ENCODE measurements at regions of chr5 and their contacts with region 1.

Region 1: DNA sequence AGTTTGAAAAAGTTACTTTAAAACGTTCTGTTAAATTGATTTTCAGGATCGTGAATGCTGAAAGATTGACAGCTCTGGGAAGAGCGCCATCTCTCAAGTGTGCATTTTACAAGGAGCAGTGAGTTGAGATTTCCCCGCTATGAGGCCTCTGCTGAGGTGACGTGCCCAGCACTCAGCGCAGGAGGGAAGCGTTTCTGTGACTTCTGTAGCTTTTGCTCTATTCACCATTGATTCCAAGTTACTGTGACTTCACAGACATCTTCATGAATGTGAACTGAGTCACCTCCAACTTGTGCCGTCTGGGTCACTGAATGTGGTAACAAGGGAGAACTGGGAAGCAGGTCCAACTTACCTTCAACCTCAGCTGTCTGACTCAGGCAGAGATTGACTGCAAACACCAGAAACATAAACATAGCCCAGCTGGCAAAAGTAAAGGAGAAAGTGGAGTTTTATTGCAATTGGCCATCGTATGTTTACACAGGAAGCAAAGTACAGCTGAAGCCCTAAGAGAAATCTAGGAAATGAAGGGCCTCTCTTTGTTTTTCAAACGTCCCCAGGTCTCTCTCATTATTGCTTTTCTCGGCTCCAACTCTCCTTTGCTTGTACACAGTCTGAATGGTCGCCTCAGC is 428.8 kb upstream of the CLINT1 start:
- DNase-seq: no peak
- ATAC-seq: peak in 1 of 2 donors; percentile 90

Region 2: GRCh38 chr5:157785801-157786200 is 502.0 kb before region 1 on chr5:
- intact Hi-C with region 1: no loop called
- DNase-seq: no peak
- ATAC-seq: no peak

Region 3: GRCh38 chr5:158265931-158266700 is 21.6 kb before region 1 on chr5:
- intact Hi-C with region 1: loop called in 1 of 2 experiments (anchors 1 kb)
- DNase-seq: no peak
- ATAC-seq: no peak